PC-9 (cell line): ENCODE measurements at regions of chr10 and their contacts with region 1.

Region 1: DNA sequence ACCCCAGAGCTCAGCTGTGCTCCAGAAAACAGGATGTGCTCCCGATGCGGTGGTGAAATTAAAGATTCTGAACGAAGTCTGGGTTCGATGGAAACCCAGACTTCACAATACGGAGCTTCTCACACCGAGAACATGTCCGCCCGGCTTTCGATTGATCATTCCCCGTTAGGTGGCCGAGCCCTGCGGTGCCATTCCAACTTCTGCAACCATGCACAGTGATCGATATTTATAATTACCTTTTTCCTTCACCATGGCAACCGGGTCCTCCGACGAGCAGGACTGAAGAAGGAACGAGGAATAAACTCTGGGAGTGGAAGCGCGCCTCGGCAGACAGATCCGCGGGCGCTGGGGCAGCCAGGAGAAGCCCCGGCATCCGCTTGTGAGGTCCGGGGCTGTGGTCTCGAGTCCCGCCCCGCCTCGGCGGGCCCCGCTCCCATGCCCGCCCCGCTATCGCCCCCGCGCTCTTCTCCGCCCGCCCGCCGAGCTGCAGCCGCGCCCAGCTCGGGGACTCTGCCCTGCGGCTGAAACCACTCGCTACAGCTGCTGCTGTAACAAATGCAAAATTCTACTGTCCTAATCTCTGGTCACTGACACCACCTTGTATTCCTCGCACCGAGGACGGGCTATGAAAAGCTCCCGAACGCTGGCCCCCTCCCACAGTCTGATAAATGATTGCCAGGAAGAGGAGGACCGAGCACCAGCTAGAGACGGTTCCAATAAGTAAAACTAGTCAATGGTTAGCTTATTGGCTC is 26.2 kb downstream of the ABLIM1 start:
- DNase-seq: peak; percentile 49 to 50
- H3K4me3 ChIP-seq: peak overlapping the region; percentile 54
- H3K27ac ChIP-seq: no peak overlapping the region
- H3K4me1 ChIP-seq: peaks cover 81% of the 10 kb centered on the region
- H3K27me3 ChIP-seq: no peaks in the 10 kb centered on the region
- CTCF ChIP-seq: no peak

Region 2: DNA sequence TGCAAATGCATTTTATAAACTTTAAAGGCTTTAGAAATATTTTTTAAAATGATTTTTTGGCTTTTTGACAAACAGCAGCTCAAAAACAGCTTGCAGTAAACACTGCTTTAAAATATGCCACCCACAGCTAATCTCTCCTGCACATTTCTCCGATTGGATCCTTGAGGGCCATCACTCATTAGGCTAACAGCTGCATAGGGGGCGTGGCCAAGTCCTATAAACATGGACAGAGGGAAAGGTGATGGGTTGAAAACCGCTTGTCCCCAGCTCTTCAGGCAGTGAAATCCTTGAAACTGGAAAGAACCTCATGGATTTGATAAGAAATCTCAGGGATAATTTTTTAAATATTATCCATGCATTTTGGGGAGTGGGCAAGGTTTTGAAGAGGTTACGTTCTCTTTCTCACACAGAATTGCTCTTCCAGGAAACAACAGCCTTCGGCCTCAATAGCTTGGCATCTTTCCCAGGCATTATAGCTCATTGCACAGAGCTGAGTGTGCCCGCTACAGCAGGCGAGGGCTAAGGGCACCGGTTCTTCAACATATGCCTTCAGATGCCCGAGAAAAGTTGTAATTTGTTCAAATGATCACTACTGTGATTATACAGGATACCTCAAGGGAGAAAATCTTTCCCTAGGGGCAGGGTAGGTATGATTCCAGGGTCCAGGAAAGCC is 878.7 kb before region 1 on chr10:
- CTCF ChIA-PET with region 1: no interaction called
- POLR2A ChIA-PET with region 1: no interaction called
- intact Hi-C with region 1: loop called (anchors 2 kb)
- DNase-seq: peak in 1 of 2 experiments; percentile 19
- H3K4me3 ChIP-seq: no peak overlapping the region
- H3K27ac ChIP-seq: no peak overlapping the region
- H3K4me1 ChIP-seq: no peaks in the 10 kb centered on the region
- H3K27me3 ChIP-seq: no peaks in the 10 kb centered on the region
- CTCF ChIP-seq: no peak

Region 3: DNA sequence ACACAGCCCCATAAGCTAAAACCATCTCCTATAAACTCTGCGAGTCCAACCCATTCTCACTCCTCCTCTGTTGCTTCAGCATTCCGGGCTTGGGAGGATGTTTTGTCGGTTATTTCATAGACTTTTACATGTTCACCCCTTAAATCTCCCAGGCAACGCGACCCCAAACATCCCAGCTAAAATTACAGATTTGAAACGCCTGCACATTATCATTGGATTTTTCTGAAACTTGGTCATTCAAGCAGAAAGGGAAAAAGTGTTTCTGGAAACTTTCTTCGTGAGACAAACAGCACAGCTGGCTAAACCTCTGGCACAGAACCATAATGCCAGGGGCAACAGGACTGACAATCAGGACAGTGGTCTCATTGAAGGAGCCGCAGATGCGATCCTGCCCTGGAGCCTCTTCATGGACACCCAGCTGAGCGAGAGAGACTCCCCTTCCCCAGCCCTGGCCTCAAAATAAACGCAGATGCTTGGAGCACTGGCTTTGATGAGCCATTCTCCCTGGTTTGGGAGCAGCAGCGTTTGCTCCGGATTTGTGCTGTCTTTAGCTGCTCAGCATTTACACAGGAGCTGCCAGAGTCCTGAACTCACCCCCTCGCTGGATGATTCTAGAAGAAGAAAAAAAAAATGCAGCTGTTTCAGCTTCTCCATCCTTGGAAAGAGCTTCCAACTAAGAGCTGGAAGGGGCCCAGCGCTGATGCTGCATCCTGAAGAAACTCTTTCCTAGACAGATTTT is 257.6 kb before region 1 on chr10:
- CTCF ChIA-PET with region 1: no interaction called
- POLR2A ChIA-PET with region 1: no interaction called
- intact Hi-C with region 1: no loop called
- DNase-seq: no peak
- H3K4me3 ChIP-seq: no peak overlapping the region
- H3K27ac ChIP-seq: no peak overlapping the region
- H3K4me1 ChIP-seq: peaks cover 14% of the 10 kb centered on the region
- H3K27me3 ChIP-seq: no peaks in the 10 kb centered on the region
- CTCF ChIP-seq: no peak

Region 4: DNA sequence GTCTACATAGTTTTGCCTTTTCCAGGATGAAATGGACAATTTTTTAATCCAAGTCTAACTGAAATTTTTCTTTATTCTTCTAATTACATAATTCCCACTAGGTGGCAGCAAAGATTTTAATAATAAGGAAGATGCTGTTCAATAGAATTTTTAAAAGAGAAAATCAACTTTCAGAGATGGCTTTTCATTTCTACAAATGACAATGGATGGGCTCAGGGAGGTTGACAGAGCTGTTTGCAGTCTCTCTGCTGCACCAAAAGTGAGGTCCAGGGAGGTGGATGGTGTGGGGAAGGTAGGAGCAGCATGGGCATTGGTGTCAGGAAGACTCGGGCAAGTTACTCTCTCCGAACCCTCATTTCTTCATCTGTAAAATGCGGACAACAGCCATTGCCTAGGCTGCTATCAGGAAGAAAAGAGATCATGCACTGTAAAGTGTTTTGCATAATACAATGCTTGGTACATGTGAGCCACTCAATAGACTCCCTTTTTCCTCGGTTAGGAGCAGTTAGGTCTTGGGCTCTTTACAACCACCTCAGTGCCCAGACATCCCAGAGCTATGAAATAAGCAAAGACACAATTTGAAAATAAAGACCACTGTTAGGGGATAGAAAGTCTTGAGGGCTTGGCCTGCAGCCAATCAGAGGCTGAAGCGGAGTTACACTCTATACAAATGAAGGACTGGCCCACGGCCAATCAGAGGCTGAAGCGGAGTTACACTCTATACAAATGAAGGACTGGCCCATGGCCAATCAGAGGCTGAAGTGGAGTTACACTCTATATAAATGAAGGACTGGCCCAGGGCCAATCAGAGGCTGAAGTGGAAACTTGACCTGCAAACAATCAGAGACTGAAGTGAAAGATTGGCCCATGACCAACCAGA is 80.8 kb before region 1 on chr10:
- CTCF ChIA-PET with region 1: no interaction called
- POLR2A ChIA-PET with region 1: no interaction called
- intact Hi-C with region 1: loop called (anchors 2 kb)
- DNase-seq: peak in 1 of 2 experiments; percentile 40
- H3K4me3 ChIP-seq: no peak overlapping the region
- H3K27ac ChIP-seq: no peak overlapping the region
- H3K4me1 ChIP-seq: no peaks in the 10 kb centered on the region
- H3K27me3 ChIP-seq: no peaks in the 10 kb centered on the region
- CTCF ChIP-seq: peak; percentile 74

Region 5: DNA sequence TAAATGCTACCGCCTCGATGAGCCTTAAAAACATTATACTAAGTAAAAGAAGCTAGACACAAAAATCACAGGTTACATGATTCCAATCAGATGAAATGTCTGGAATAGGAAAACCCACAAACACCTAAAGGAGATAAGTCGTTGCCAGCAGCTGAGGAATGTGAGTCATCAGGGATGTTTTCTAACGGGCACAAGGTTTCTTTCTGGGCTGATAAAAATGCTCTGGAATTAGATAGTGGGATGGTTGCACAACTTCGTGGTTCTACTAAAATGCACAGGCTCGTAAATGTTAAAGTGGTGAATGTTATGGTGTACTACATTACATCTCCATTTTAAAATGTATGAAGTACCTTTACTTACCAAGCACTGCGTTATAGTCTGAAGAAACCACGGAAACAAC is 16.5 kb after region 1 on chr10:
- CTCF ChIA-PET with region 1: interaction called, 3 read pairs
- POLR2A ChIA-PET with region 1: no interaction called
- intact Hi-C with region 1: loop called (anchors 2 kb)
- DNase-seq: peak; percentile 21 to 66
- H3K4me3 ChIP-seq: no peak overlapping the region
- H3K27ac ChIP-seq: no peak overlapping the region
- H3K4me1 ChIP-seq: peaks cover 40% of the 10 kb centered on the region
- H3K27me3 ChIP-seq: no peaks in the 10 kb centered on the region
- CTCF ChIP-seq: no peak

Region 6: GRCh38 chr10:114697061-114697598 is 65.3 kb after region 1 on chr10:
- CTCF ChIA-PET with region 1: no interaction called
- POLR2A ChIA-PET with region 1: no interaction called
- intact Hi-C with region 1: loop called (anchors 2 kb)
- DNase-seq: peak; percentile 78 to 92
- H3K4me3 ChIP-seq: peak overlapping the region; percentile 23; the same call in 1 of the 2 replicates
- H3K27ac ChIP-seq: peak overlapping the region; percentile 64
- H3K4me1 ChIP-seq: peaks cover 33% of the 10 kb centered on the region
- H3K27me3 ChIP-seq: no peaks in the 10 kb centered on the region
- CTCF ChIP-seq: no peak

Region 7: GRCh38 chr10:114729103-114729659 is 97.3 kb after region 1 on chr10:
- CTCF ChIA-PET with region 1: no interaction called
- POLR2A ChIA-PET with region 1: no interaction called
- intact Hi-C with region 1: no loop called
- DNase-seq: no peak
- H3K4me3 ChIP-seq: no peak overlapping the region
- H3K27ac ChIP-seq: no peak overlapping the region
- H3K4me1 ChIP-seq: peaks cover 28% of the 10 kb centered on the region
- H3K27me3 ChIP-seq: no peaks in the 10 kb centered on the region
- CTCF ChIP-seq: no peak

Region 8: GRCh38 chr10:114767101-114767985 is 135.5 kb after region 1 on chr10:
- CTCF ChIA-PET with region 1: no interaction called
- POLR2A ChIA-PET with region 1: interaction called, 31 read pairs
- intact Hi-C with region 1: no loop called
- DNase-seq: no peak
- H3K4me3 ChIP-seq: peak overlapping the region; percentile 71
- H3K27ac ChIP-seq: no peak overlapping the region
- H3K4me1 ChIP-seq: peaks cover 16% of the 10 kb centered on the region
- H3K27me3 ChIP-seq: no peaks in the 10 kb centered on the region
- CTCF ChIP-seq: no peak

Region 9: GRCh38 chr10:114869520-114869892 is 237.7 kb after region 1 on chr10:
- CTCF ChIA-PET with region 1: no interaction called
- POLR2A ChIA-PET with region 1: no interaction called
- intact Hi-C with region 1: no loop called
- DNase-seq: no peak
- H3K4me3 ChIP-seq: no peak overlapping the region
- H3K27ac ChIP-seq: no peak overlapping the region
- H3K4me1 ChIP-seq: peaks cover 8% of the 10 kb centered on the region
- H3K27me3 ChIP-seq: no peaks in the 10 kb centered on the region
- CTCF ChIP-seq: no peak